ENCODE measurements at regions of chr18 and their contacts with region 1.

Region 1: GRCh38 chr18:36809590-36810381 is 19.0 kb downstream of the TPGS2 start:
- DNase-seq: no peak
- ATAC-seq: peak; percentile 84

Region 2: DNA sequence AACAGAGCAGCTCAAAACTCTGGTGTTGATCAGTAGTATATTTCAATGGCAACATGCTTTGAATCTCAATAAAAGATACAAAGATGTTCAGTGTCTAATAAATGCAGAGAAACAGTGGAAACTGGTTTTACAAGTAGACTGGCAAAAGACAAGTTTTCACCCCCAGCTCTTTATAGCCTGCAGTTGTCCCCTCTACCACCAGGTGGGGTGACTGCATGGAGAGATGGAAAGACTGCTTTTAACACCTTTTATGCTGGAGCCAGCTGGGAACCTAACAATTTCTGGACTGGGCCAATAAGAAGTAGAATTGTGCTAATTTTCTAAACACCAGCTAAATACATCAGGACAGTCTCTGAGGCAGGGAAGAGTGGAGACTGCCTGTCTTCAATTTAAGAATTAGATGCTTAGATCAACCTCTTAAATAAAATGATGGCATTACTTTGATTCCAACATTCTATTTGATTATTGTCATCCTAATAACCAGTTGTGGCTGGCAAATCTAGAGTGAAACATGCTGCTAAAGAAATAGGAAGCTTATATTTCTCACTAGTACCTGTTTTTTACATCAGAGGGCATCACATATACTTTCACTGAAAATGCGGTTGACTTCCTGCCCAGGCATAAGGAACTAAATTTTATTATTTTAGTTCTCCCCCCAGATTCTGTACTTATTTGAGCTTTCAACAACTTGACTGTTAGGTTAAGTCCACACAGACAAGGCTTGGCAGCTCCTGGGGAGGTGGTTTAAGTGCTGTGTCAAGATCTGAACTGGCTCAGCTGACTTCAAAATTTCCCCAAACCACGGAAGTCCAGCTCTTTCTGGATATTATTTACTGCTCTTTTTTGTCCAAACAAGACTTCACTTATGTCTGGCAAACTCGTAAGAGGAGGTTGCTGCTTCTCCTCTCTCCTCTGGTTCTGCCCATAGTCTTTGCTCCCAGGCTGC is 121.5 kb before region 1 on chr18:
- intact Hi-C with region 1: loop called (anchors 10 kb)
- DNase-seq: no peak
- ATAC-seq: peak; percentile 70

Region 3: DNA sequence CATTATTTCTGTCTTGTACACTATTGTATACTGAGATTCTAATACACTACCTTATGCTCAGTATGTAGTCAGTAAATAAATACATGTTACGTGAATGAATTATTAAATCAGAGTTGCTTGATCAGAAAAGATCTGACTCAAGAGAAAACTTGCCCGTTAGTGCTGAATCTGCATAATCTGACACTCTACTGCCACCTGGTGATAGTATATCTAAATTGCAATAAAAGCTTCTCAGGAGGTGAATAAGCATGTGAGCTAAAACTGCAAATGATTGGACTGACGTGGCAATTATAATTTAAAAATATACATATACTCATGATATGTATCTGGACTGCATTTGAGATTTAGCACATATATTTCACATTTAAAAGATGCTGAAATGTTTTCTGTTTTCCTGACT is 89.5 kb after region 1 on chr18:
- intact Hi-C with region 1: no loop called
- DNase-seq: no peak
- ATAC-seq: no peak

Measured in Right ventricle myocardium superior (tissue), 1 donor.